CD4-positive, alpha-beta T cell (primary cell): ENCODE measurements at regions of chr20 and their contacts with region 1.

Region 1: GRCh38 chr20:33731693-33732165 is at the start of gene ZNF341:
- DNase-seq: peak in 13 of 14 experiments; percentile 80 to 96 (median 87)
- ATAC-seq: peak; percentile 83
- H3K4me3 ChIP-seq: peak within 1 kb of the TSS; percentile 85
- H3K4me3 Mint-ChIP-seq: peak within 1 kb of the TSS; percentile 93
- H3K27ac ChIP-seq: peak within 1 kb of the TSS; percentile 57 to 70
- H3K27ac Mint-ChIP-seq: peak within 1 kb of the TSS; percentile 96
- H3K4me1 ChIP-seq: peaks cover 28% of the 10 kb centered on the region
- H3K4me1 Mint-ChIP-seq: peaks cover 22% of the 10 kb centered on the region
- H3K27me3 ChIP-seq: no peaks in the 10 kb centered on the region
- H3K27me3 Mint-ChIP-seq: no peaks in the 10 kb centered on the region
- CTCF ChIP-seq: peak; percentile 76
- total RNA-seq, gene ZNF341: 2.1 to 2.7 TPM

Region 2: GRCh38 chr20:33443512-33444239 is 288.1 kb before region 1 on chr20 and contains the start of gene SNTA1:
- CTCF ChIA-PET with region 1: interaction called, 3 read pairs
- POLR2A ChIA-PET with region 1: interaction called, 5 read pairs
- intact Hi-C with region 1: loop called in 1 of 2 experiments (anchors 5 kb)
- DNase-seq: peak; percentile 74 to 95 (median 86)
- ATAC-seq: peak; percentile 57
- H3K4me3 ChIP-seq: peak within 1 kb of the TSS; percentile 90
- H3K4me3 Mint-ChIP-seq: peak within 1 kb of the TSS; percentile 95
- H3K27ac ChIP-seq: peak within 1 kb of the TSS; percentile 72 to 80
- H3K27ac Mint-ChIP-seq: peak within 1 kb of the TSS; percentile 94
- H3K4me1 ChIP-seq: peaks cover 25% of the 10 kb centered on the region
- H3K4me1 Mint-ChIP-seq: peaks cover 22% of the 10 kb centered on the region
- H3K27me3 ChIP-seq: no peaks in the 10 kb centered on the region
- H3K27me3 Mint-ChIP-seq: no peaks in the 10 kb centered on the region
- CTCF ChIP-seq: no peak
- total RNA-seq, gene SNTA1: 5.0 to 5.2 TPM

Region 3: DNA sequence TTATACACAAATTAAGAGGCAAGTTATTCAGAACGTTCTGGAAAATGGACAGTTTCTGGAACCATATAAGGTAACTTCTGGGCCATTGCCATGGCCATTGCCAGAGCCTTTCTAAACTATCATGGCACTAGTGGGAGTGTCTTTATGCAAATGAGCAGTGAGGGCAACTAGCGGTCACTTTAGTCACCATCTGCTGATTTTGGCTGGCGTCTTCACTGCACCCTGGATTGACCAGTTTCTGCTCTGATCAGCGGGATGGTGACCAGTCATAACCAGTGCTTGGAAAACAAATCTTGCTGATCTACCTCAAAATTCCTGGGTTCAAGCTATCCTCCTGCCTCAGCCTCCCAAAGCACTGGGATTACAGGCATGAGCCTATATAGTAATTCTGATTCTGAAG is 280.9 kb before region 1 on chr20:
- CTCF ChIA-PET with region 1: no interaction called
- POLR2A ChIA-PET with region 1: no interaction called
- intact Hi-C with region 1: loop called (anchors 2 kb)
- DNase-seq: no peak
- ATAC-seq: no peak
- H3K4me3 ChIP-seq: no peak overlapping the region
- H3K4me3 Mint-ChIP-seq: no peak overlapping the region
- H3K27ac ChIP-seq: no peak overlapping the region
- H3K27ac Mint-ChIP-seq: no peak overlapping the region
- H3K4me1 ChIP-seq: no peaks in the 10 kb centered on the region
- H3K4me1 Mint-ChIP-seq: no peaks in the 10 kb centered on the region
- H3K27me3 ChIP-seq: no peaks in the 10 kb centered on the region
- H3K27me3 Mint-ChIP-seq: no peaks in the 10 kb centered on the region
- CTCF ChIP-seq: no peak

Region 4: DNA sequence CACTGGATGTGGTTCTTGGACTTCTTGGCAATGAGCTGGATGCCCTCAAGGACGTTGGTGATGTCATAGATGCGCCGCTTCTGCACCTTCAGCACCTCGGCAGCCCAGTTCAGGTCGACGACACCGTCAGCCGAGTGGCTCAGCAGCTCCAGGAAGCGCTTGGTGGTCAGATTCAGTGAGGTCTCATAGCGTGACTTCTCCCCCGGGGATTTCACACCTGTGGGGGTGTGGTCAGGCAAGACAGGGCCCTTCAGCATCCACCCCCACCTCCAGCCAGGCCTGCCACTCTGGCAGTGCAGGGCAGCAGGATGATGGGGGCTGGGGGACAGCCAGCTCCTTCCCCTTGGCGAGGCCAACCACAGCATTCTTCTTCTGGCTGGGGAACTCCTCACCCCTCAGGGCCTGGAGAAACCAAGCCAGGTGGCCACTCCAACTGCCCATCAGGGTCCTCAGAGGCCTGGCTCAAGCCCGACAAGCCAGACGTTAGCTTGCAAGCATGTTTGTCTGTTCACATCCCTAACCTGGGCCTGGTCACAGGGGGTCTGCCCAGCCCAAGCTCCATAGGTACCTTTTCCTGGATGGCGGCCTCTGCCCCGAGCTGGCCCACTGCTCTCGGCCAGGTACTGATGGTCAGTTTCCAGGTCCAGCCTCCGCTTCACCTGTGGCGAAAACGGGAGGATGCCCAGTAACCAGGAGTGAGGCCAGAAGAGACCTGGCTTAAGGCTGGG is 51.8 kb before region 1 on chr20:
- CTCF ChIA-PET with region 1: no interaction called
- POLR2A ChIA-PET with region 1: interaction called, 15 read pairs
- intact Hi-C with region 1: loop called in 1 of 2 experiments (anchors 2 kb)
- DNase-seq: peak in 6 of 14 experiments; percentile 30 to 85 (median 68)
- ATAC-seq: peak; percentile 53
- H3K4me3 ChIP-seq: no peak overlapping the region
- H3K4me3 Mint-ChIP-seq: peak overlapping the region; percentile 51
- H3K27ac ChIP-seq: peak overlapping the region in 1 of 2 donors; percentile 45
- H3K27ac Mint-ChIP-seq: peak overlapping the region; percentile 66
- H3K4me1 ChIP-seq: peaks cover 63% of the 10 kb centered on the region
- H3K4me1 Mint-ChIP-seq: peaks cover 49% of the 10 kb centered on the region
- H3K27me3 ChIP-seq: no peaks in the 10 kb centered on the region
- H3K27me3 Mint-ChIP-seq: no peaks in the 10 kb centered on the region
- CTCF ChIP-seq: no peak

Region 5: DNA sequence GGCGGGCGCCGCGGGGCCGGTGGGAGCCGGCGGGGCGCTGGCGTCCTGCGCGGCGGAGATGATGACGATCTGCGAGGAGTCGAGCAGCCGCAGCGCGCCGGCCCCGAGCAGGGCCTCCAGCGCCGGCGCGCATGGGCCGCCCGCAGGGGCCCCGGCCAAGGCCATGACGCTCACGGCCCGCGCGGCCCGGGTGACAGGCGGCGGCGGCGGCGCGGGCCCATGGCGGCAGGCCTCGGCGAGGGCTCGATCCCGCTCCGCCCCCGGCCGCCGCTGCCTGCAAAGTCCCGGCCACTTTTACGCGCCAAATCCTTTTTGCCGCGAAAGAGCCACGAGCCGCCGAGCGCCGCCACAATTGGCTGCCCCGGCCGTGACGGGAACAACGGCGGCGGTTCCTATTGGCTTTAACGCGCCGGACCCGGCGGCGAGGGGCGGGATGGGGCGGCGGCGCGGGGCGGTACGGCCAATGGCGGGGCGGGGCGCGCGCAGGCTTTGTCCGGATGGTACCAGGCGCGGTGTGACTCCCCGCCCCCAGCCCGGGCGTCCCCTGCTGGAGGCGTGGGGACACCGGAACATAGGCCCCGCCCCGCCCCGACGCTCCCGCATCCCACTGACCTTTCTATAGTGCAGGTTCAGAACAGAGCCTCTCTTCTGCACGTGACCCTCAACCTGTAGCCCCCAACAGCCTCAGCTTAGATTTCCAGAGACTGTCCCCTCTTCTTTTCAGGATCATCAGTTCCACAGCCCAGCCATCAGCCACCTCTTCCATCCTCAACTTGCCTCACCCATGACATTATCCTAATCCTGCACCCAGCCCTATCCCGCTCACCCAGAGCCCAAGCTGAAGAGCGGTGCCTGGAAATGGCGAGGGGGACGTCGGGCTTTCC is 45.4 kb before region 1 on chr20 and contains the start of gene E2F1:
- CTCF ChIA-PET with region 1: interaction called, 6 read pairs
- POLR2A ChIA-PET with region 1: interaction called, 9 read pairs
- intact Hi-C with region 1: loop called in 1 of 2 experiments (anchors 2 kb)
- DNase-seq: peak; percentile 81 to 97 (median 94)
- ATAC-seq: peak; percentile 94
- H3K4me3 ChIP-seq: peak within 1 kb of the TSS; percentile 47
- H3K4me3 Mint-ChIP-seq: peak within 1 kb of the TSS; percentile 89
- H3K27ac ChIP-seq: no peak within 1 kb of the TSS
- H3K27ac Mint-ChIP-seq: peak within 1 kb of the TSS; percentile 39
- H3K4me1 ChIP-seq: peaks cover 50% of the 10 kb centered on the region
- H3K4me1 Mint-ChIP-seq: peaks cover 50% of the 10 kb centered on the region
- H3K27me3 ChIP-seq: no peaks in the 10 kb centered on the region
- H3K27me3 Mint-ChIP-seq: no peaks in the 10 kb centered on the region
- CTCF ChIP-seq: peak; percentile 23
- total RNA-seq, gene E2F1: 1.2 to 1.6 TPM

Region 6: GRCh38 chr20:33719989-33720709 is 11.6 kb before region 1 on chr20 and contains the start of gene PXMP4:
- CTCF ChIA-PET with region 1: interaction called, 19 read pairs
- POLR2A ChIA-PET with region 1: interaction called, 53 read pairs
- intact Hi-C with region 1: loop called in 1 of 2 experiments (anchors 1 kb)
- DNase-seq: peak; percentile 68 to 97 (median 82)
- ATAC-seq: peak; percentile 94
- H3K4me3 ChIP-seq: peak within 1 kb of the TSS; percentile 66
- H3K4me3 Mint-ChIP-seq: peak within 1 kb of the TSS; percentile 83
- H3K27ac ChIP-seq: peak within 1 kb of the TSS; percentile 2 to 72
- H3K27ac Mint-ChIP-seq: peak within 1 kb of the TSS; percentile 60
- H3K4me1 ChIP-seq: peaks cover 20% of the 10 kb centered on the region
- H3K4me1 Mint-ChIP-seq: peaks cover 18% of the 10 kb centered on the region
- H3K27me3 ChIP-seq: no peaks in the 10 kb centered on the region
- H3K27me3 Mint-ChIP-seq: no peaks in the 10 kb centered on the region
- CTCF ChIP-seq: peak; percentile 13
- total RNA-seq, gene PXMP4: 3.6 to 4.1 TPM

Region 7: GRCh38 chr20:34363062-34363464 is 631.3 kb after region 1 on chr20 and contains the start of gene ITCH:
- CTCF ChIA-PET with region 1: no interaction called
- POLR2A ChIA-PET with region 1: no interaction called
- intact Hi-C with region 1: loop called in 1 of 2 experiments (anchors 5 kb)
- DNase-seq: peak; percentile 86 to 96 (median 89)
- ATAC-seq: peak; percentile 100
- H3K4me3 ChIP-seq: peak within 1 kb of the TSS; percentile 98
- H3K4me3 Mint-ChIP-seq: peak within 1 kb of the TSS; percentile 100
- H3K27ac ChIP-seq: peak within 1 kb of the TSS; percentile 72 to 78
- H3K27ac Mint-ChIP-seq: peak within 1 kb of the TSS; percentile 95
- H3K4me1 ChIP-seq: peaks cover 47% of the 10 kb centered on the region
- H3K4me1 Mint-ChIP-seq: peaks cover 37% of the 10 kb centered on the region
- H3K27me3 ChIP-seq: no peaks in the 10 kb centered on the region
- H3K27me3 Mint-ChIP-seq: no peaks in the 10 kb centered on the region
- CTCF ChIP-seq: no peak
- total RNA-seq, gene ITCH: 44.2 to 47.0 TPM